ENCODE measurements at regions of chr7 and their contacts with region 1.

Region 1: DNA sequence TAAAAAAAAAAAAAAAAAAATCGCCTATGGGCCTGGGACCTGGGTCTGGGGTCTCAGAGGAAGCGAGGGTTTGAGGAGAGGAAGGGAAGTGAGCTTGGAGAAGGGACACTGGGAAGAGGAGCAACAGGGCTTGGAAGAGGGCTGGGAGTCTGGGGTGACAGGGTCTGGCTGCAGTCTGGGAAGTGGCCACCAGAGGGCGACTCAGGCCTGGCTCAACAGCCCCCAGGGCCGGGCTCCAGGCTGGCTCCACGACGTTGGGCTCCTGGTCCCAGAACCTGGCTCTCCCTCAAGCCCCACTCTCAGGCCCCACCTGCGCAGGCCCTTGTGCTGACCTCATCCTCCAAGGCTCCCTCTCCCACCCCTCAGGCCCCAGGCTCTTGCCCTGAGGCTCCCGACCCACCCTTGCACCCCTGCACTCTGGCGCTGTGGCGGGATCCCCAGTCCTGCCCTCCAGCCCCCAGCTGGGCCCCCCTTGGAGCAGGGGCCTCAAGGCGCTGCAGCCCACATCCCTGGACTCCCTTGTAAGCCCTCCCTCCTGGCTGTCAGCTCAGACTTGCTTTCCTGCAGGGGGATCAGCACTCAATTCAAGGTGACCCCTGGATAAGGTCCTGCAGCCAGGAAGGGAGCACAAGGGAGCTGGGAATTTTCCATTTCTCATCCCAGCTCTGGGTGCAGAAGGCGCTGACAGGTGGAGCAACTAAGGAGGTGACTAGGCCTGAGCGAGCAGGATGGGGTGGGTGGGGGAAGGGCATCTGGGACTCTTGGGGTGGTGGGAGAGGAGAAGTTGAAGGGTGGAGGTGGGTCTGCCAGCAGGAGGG is 5.4 kb upstream of the SPACDR start:
- DNase-seq: peak; percentile 95
- ATAC-seq: peak; percentile 74

Region 2: GRCh38 chr7:100407285-100408180 is 61.9 kb before region 1 on chr7:
- intact Hi-C with region 1: no loop called
- DNase-seq: no peak
- ATAC-seq: peak; percentile 74

Region 3: DNA sequence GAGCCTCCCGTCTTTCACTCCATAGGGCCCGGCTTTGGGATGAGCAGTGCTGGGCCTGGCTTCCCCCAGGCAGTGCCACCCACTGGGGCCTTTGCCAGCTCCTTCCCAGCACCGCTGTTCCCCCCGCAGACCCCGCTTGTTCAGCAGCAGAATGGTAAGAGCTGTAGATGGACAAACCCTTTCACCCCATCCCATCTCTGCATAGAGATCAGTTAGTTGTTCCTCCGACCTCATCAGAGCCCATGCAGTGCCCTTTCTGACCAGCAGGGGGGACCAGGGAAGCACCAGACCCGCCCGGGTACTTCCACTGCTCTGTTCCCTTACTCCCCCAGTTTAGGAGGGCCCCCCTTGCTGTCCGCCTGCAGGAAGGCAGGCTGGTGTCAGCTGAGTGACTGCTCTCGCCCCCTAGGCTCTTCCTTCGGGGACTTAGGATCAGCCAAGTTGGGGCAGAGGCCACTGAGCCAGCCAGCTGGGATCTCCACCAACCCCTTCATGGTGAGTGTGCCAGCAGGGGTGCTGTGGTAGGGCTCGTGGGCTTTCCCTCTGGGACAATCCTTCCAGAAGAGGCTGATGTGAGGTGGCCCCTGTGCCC is 94.5 kb after region 1 on chr7:
- intact Hi-C with region 1: loop called (anchors 5 kb)
- DNase-seq: peak; percentile 93
- ATAC-seq: peak; percentile 66

Region 4: DNA sequence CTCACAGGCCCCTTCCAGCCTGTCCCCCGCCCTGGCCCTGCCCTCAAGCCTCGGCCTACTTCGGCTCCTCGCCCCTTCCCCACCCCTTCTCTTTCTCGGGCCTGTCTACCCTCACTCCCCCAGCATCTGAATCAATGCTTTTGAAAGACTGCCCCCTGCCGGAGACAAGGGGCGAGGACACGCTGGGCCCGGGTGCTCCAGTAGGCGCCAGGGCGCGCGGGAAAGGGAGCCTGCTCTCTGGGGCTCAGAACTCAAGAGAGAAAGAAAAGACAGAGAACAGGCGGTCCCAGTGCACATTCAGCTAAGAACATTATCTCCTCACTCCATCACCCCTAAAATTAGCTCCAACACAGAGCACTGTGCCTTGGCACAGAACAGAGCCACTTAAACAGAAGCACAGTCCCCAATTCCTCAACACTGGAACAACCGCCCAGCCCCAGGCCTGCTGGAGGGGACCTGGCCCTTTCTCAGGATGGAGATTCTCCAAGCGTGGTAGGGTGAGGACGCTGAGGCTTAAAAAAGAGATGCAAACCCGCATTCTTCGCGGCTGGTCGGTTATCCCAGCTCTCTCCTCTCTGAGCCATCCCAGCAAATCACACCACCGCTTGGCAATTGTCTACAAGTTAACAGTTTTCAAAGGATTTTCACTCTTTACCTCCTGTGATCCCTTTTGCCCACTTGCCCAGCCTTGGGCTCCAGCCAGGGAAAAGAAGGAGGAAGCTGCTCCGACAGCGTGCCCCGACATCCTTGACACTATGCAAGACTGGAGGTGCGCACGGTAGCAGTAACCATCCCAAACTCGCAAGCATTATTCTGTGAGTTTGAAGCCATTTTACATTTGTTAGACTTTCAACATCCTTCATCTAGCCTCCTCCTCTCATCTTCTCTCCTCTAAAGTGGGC is 222.5 kb after region 1 on chr7:
- intact Hi-C with region 1: loop called (anchors 5 kb)
- DNase-seq: peak; percentile 91
- ATAC-seq: peak; percentile 88